Activated naive CD4-positive, alpha-beta T cell treated with anti-CD3 and anti-CD28 coated beads for 36 hours (primary cell): ENCODE measurements at regions of chrX and their contacts with region 1.

Region 1: DNA sequence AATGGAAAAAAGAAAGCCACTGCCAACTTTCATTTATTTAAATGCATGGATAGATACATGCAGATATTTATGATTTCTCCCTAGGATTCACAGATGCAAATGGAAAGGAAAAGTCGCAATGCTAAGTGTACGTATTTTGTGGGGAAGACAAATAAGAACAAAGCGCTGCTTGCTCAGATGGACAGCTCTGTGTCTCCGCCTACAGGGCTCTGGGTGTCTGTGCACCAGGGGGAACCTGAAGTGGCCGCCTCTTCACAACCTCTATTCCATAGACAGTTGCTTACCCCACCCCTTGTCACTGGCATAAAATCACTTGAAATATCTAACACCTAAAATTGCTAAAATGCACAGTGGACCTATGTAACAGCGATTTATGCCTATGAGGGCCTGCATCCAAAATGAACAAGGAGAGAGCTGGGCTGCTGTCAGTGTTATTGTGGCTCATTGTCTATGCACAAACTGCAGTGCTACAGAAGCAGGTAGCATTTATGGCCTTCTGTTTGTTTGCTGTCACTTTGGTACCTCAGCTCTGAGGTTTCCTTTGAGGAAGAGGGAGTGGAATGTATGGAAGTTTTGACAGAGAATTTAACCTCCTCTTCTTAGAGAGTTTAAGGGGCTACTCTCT is 58.6 kb upstream of the PAGE1 start:
- DNase-seq: peak; percentile 68
- H3K4me3 Mint-ChIP-seq: no peak overlapping the region
- H3K27ac Mint-ChIP-seq: no peak overlapping the region
- H3K4me1 Mint-ChIP-seq: no peaks in the 10 kb centered on the region
- H3K27me3 Mint-ChIP-seq: no peaks in the 10 kb centered on the region

Region 2: DNA sequence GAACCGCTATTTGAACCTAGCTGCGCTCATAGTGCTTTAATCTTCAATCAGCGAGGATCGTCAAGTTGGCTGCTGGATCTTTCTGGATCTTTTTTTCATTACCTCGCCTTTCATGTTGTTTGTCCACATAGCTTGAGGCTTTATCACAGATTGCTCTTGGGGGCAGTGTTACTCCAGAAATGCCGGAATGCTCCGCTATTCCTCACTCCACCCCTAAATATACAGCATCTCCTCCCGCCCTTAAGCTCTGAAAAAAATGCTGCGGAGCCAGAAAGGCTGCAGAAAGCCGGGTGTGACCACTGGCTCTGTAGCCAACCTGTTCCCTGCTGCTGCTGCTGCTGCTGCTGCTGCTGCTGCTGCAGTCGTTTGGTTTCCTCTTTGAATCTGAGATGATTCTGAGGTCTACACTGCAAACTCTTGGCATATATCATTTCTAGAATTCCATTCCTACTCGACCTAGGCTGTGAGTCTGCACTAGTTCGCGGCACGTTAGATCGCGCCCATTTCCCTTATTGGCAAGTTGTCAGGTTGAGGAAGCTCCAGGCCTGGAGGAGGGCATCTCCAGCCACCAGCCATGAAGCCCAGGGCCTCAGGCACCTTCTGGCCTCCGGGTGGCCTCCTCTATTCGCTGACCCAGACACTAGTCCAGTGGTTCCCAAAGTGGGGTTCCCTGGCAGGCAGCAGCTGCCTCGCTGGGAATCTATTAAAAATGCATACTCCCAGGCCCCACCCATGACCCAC is 1122.8 kb before region 1 on chrX:
- CTCF ChIA-PET with region 1: no interaction called
- intact Hi-C with region 1: loop called (anchors 5 kb)
- DNase-seq: peak; percentile 86
- H3K4me3 Mint-ChIP-seq: no peak overlapping the region
- H3K27ac Mint-ChIP-seq: peak overlapping the region; percentile 36
- H3K4me1 Mint-ChIP-seq: peaks cover 10% of the 10 kb centered on the region
- H3K27me3 Mint-ChIP-seq: no peaks in the 10 kb centered on the region

Region 3: DNA sequence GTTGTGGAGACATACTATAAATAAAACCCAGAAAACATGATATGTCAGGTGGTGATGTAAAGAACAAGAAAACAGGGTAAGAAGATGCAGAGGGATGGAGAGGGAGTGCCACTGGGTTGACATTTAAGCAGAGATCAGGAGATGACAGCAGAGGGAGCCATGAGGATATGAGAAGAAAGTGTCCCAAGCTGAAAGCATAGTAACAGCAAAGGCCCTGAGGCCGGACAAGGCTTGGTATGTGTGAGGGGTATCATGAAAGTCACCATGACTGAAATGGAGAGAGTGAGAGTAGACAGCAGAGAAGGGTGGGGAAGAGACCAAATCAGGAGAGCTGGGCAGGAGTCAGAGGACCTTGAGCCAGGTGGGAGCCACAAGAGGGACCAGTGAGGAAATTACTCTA is 634.2 kb before region 1 on chrX:
- CTCF ChIA-PET with region 1: no interaction called
- intact Hi-C with region 1: loop called (anchors 5 kb)
- DNase-seq: no peak
- H3K4me3 Mint-ChIP-seq: no peak overlapping the region
- H3K27ac Mint-ChIP-seq: no peak overlapping the region
- H3K4me1 Mint-ChIP-seq: peaks cover 35% of the 10 kb centered on the region
- H3K27me3 Mint-ChIP-seq: no peaks in the 10 kb centered on the region

Region 4: GRCh38 chrX:49137492-49137891 is 616.9 kb before region 1 on chrX:
- CTCF ChIA-PET with region 1: no interaction called
- intact Hi-C with region 1: loop called (anchors 5 kb)
- DNase-seq: no peak
- H3K4me3 Mint-ChIP-seq: no peak overlapping the region
- H3K27ac Mint-ChIP-seq: no peak overlapping the region
- H3K4me1 Mint-ChIP-seq: no peaks in the 10 kb centered on the region
- H3K27me3 Mint-ChIP-seq: no peaks in the 10 kb centered on the region

Region 5: GRCh38 chrX:49191033-49191871 is 563.1 kb before region 1 on chrX:
- CTCF ChIA-PET with region 1: no interaction called
- intact Hi-C with region 1: loop called (anchors 1 kb)
- DNase-seq: peak; percentile 89
- H3K4me3 Mint-ChIP-seq: peak overlapping the region; percentile 97
- H3K27ac Mint-ChIP-seq: peak overlapping the region; percentile 94
- H3K4me1 Mint-ChIP-seq: peaks cover 25% of the 10 kb centered on the region
- H3K27me3 Mint-ChIP-seq: no peaks in the 10 kb centered on the region

Region 6: DNA sequence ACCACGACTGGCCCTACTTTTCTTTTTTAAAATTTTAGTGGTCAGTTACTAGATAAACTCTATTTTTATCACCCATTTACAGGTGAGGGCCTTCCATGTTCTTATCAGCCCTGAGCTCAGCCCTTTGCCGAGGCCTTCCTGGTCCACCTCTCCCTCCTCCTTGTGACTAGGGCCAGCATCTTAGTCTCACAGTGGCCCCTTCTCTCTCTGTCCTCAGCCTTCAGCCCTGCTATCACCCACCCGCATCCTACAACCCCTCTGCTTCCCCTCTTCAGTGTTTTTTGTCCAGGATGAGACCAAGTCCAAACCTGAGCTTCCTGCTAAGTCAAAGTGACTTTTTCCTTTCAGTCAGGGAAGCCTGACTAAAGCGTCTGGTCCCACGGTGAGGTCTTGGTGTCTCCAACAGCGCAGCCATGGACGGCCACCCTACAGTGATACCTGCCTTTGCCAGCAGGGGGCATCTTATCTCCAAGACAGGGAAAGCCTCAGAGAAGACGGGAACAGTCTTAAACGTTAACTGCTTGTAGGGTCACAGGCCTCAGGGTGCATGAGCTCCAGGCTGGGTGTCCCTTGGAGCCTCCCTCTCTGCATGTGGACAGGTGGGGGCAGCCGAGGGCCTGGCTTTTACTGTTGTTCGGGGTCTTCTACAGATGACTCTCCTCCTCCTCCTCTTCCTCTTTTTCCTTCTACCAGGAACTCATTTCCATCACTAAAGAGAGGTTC is 462.6 kb before region 1 on chrX:
- CTCF ChIA-PET with region 1: interaction called, 5 read pairs
- intact Hi-C with region 1: loop called (anchors 1 kb)
- DNase-seq: peak; percentile 88
- H3K4me3 Mint-ChIP-seq: no peak overlapping the region
- H3K27ac Mint-ChIP-seq: no peak overlapping the region
- H3K4me1 Mint-ChIP-seq: peaks cover 35% of the 10 kb centered on the region
- H3K27me3 Mint-ChIP-seq: no peaks in the 10 kb centered on the region

Region 7: GRCh38 chrX:49704691-49705404 is 49.5 kb before region 1 on chrX:
- CTCF ChIA-PET with region 1: no interaction called
- intact Hi-C with region 1: loop called (anchors 10 kb)
- DNase-seq: no peak
- H3K4me3 Mint-ChIP-seq: no peak overlapping the region
- H3K27ac Mint-ChIP-seq: no peak overlapping the region
- H3K4me1 Mint-ChIP-seq: no peaks in the 10 kb centered on the region
- H3K27me3 Mint-ChIP-seq: no peaks in the 10 kb centered on the region